B cell (primary cell): ENCODE measurements at regions of chr4 and their contacts with region 1.

Region 1: DNA sequence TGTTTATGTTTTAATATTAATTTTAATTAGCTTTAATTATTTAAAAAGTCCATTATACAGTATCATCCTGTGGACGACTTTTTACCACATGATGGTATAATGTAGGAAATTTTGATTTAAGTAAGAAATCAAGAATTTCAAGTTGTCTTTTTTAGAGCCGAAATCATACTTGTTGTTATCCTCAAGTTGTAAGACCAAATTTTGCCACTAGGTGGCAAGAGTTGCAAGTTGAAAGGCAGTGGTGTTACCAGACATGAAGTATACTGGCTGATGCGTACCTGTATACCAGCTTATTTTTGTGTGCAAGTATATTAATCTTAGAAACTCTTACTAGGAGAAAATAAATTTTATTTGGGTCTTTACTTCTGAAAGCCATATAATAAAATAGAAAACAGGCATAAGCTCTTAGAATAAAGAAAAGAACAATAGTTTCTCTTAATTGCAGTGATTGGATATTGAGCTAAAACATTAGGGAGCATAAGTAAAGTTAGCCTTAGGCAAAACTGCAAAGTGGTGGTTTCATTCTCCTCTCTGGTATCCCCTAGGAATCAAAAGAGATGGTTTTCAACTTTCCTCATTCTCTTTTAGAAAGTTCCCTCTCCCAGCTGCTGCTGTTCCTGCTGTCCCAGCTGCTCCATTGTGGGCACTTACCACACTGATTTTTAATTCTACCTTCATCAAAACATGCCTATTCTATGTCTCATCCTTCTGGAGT is 118.0 kb upstream of the WDFY3 start:
- DNase-seq: peak; percentile 74
- ATAC-seq: peak; percentile 60
- H3K4me3 ChIP-seq: no peak overlapping the region
- H3K4me3 Mint-ChIP-seq: no peak overlapping the region
- H3K27ac ChIP-seq: no peak overlapping the region
- H3K27ac Mint-ChIP-seq: no peak overlapping the region
- H3K4me1 ChIP-seq: no peaks in the 10 kb centered on the region
- H3K4me1 Mint-ChIP-seq: peaks cover 6% of the 10 kb centered on the region
- H3K27me3 ChIP-seq: peaks cover 0 to 6% (median 5%) of the 10 kb centered on the region in 4 experiments
- H3K27me3 Mint-ChIP-seq: peaks cover 8% of the 10 kb centered on the region
- CTCF ChIP-seq: peak; percentile 89

Region 2: DNA sequence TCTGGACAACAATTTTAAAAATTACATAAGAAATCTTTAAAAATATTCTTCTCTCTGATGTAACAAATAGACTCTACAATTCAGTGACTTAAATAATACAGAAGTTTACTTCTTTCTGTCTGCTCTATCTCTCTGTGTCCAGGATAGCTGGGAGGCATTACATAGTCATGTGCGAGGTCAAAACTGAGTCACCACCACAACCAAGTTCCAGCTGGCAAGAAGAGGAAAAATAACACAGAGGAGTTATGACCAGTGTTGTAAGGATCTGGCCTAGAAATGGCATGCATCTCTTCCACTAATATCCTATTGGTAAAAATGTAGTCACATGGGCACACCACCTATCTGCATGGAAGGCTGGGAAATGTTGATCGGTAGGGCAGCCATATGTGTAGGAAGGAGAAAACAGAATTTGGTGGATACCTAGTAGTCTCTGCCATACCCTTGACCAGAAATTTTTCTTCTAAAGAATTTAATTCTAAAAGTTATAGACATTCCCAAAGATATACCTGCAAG is 78.6 kb before region 1 on chr4:
- CTCF ChIA-PET with region 1: no interaction called
- POLR2A ChIA-PET with region 1: no interaction called
- intact Hi-C with region 1: no loop called
- DNase-seq: no peak
- ATAC-seq: no peak
- H3K4me3 ChIP-seq: no peak overlapping the region
- H3K4me3 Mint-ChIP-seq: no peak overlapping the region
- H3K27ac ChIP-seq: no peak overlapping the region
- H3K27ac Mint-ChIP-seq: no peak overlapping the region
- H3K4me1 ChIP-seq: no peaks in the 10 kb centered on the region
- H3K4me1 Mint-ChIP-seq: no peaks in the 10 kb centered on the region
- H3K27me3 ChIP-seq: no peaks in the 10 kb centered on the region
- H3K27me3 Mint-ChIP-seq: no peaks in the 10 kb centered on the region
- CTCF ChIP-seq: no peak

Region 3: DNA sequence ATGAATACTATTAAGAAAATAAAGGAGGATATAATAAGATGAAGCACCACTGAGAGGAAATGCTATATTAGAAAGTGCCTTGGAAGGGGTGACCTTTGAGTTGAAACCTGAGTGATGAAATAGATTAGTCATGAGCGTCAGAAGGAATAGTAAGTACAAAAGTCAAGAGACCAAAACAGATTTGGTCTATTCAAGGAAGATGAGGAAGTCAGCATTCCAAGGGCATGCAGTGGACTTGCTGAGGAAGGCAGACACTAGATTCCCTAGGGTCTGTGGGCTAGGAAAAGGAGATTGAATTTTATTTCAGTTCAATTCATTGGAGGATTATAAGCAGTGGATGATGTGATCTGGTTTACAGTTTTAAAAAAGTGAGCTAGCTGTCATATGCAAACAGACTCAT is 45.0 kb before region 1 on chr4:
- CTCF ChIA-PET with region 1: no interaction called
- POLR2A ChIA-PET with region 1: no interaction called
- intact Hi-C with region 1: no loop called
- DNase-seq: no peak
- ATAC-seq: no peak
- H3K4me3 ChIP-seq: no peak overlapping the region
- H3K4me3 Mint-ChIP-seq: no peak overlapping the region
- H3K27ac ChIP-seq: no peak overlapping the region
- H3K27ac Mint-ChIP-seq: no peak overlapping the region
- H3K4me1 ChIP-seq: no peaks in the 10 kb centered on the region
- H3K4me1 Mint-ChIP-seq: no peaks in the 10 kb centered on the region
- H3K27me3 ChIP-seq: peaks cover 0 to 3% (median 0%) of the 10 kb centered on the region in 4 experiments
- H3K27me3 Mint-ChIP-seq: peaks cover 7% of the 10 kb centered on the region
- CTCF ChIP-seq: no peak

Region 4: DNA sequence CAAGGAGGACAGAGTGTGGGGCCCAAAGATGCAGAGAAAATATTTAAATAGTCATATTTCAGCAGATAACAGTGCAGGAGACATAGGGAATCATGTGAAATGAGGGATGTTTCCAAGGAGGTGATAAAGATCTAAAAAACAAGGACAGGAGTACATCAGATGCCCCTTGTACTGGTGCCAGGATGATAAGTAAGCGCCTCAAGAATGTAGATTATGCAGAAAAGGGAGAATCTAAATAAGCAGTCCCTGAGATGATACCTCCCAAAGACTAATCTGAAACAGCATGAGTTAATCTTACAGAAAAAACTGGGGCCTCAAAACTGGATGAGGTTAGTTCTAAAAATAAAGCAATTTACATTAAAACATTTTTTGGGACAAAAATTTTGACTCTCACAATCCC is 18.1 kb after region 1 on chr4:
- CTCF ChIA-PET with region 1: interaction called, 17 read pairs
- POLR2A ChIA-PET with region 1: no interaction called
- intact Hi-C with region 1: no loop called
- DNase-seq: no peak
- ATAC-seq: no peak
- H3K4me3 ChIP-seq: no peak overlapping the region
- H3K4me3 Mint-ChIP-seq: no peak overlapping the region
- H3K27ac ChIP-seq: no peak overlapping the region
- H3K27ac Mint-ChIP-seq: no peak overlapping the region
- H3K4me1 ChIP-seq: no peaks in the 10 kb centered on the region
- H3K4me1 Mint-ChIP-seq: no peaks in the 10 kb centered on the region
- H3K27me3 ChIP-seq: peaks cover 0 to 3% (median 0%) of the 10 kb centered on the region in 4 experiments
- H3K27me3 Mint-ChIP-seq: peaks cover 10% of the 10 kb centered on the region
- CTCF ChIP-seq: no peak

Region 5: GRCh38 chr4:85147439-85148076 is 63.0 kb after region 1 on chr4:
- CTCF ChIA-PET with region 1: interaction called, 7 read pairs
- POLR2A ChIA-PET with region 1: no interaction called
- intact Hi-C with region 1: loop called (anchors 2 kb)
- DNase-seq: peak; percentile 82
- ATAC-seq: peak; percentile 83
- H3K4me3 ChIP-seq: no peak overlapping the region
- H3K4me3 Mint-ChIP-seq: no peak overlapping the region
- H3K27ac ChIP-seq: no peak overlapping the region
- H3K27ac Mint-ChIP-seq: no peak overlapping the region
- H3K4me1 ChIP-seq: peaks cover 0 to 2% of the 10 kb centered on the region in 2 donors
- H3K4me1 Mint-ChIP-seq: peaks cover 6% of the 10 kb centered on the region
- H3K27me3 ChIP-seq: no peaks in the 10 kb centered on the region
- H3K27me3 Mint-ChIP-seq: no peaks in the 10 kb centered on the region
- CTCF ChIP-seq: peak; percentile 90

Region 6: GRCh38 chr4:85968945-85969819 is 884.6 kb after region 1 on chr4:
- CTCF ChIA-PET with region 1: interaction called, 58 read pairs
- POLR2A ChIA-PET with region 1: no interaction called
- intact Hi-C with region 1: loop called (anchors 1 kb)
- DNase-seq: peak; percentile 66
- ATAC-seq: peak; percentile 28
- H3K4me3 ChIP-seq: no peak overlapping the region
- H3K4me3 Mint-ChIP-seq: no peak overlapping the region
- H3K27ac ChIP-seq: no peak overlapping the region
- H3K27ac Mint-ChIP-seq: no peak overlapping the region
- H3K4me1 ChIP-seq: peaks cover 0 to 6% of the 10 kb centered on the region in 2 donors
- H3K4me1 Mint-ChIP-seq: peaks cover 15% of the 10 kb centered on the region
- H3K27me3 ChIP-seq: no peaks in the 10 kb centered on the region
- H3K27me3 Mint-ChIP-seq: no peaks in the 10 kb centered on the region
- CTCF ChIP-seq: peak; percentile 75

Region 7: GRCh38 chr4:86032476-86033022 is 948.0 kb after region 1 on chr4:
- CTCF ChIA-PET with region 1: interaction called, 14 read pairs
- POLR2A ChIA-PET with region 1: no interaction called
- intact Hi-C with region 1: no loop called
- DNase-seq: no peak
- ATAC-seq: no peak
- H3K4me3 ChIP-seq: no peak overlapping the region
- H3K4me3 Mint-ChIP-seq: no peak overlapping the region
- H3K27ac ChIP-seq: no peak overlapping the region
- H3K27ac Mint-ChIP-seq: no peak overlapping the region
- H3K4me1 ChIP-seq: no peaks in the 10 kb centered on the region
- H3K4me1 Mint-ChIP-seq: no peaks in the 10 kb centered on the region
- H3K27me3 ChIP-seq: peaks cover 0 to 15% (median 3%) of the 10 kb centered on the region in 4 experiments
- H3K27me3 Mint-ChIP-seq: peaks cover 31% of the 10 kb centered on the region
- CTCF ChIP-seq: no peak

Region 8: DNA sequence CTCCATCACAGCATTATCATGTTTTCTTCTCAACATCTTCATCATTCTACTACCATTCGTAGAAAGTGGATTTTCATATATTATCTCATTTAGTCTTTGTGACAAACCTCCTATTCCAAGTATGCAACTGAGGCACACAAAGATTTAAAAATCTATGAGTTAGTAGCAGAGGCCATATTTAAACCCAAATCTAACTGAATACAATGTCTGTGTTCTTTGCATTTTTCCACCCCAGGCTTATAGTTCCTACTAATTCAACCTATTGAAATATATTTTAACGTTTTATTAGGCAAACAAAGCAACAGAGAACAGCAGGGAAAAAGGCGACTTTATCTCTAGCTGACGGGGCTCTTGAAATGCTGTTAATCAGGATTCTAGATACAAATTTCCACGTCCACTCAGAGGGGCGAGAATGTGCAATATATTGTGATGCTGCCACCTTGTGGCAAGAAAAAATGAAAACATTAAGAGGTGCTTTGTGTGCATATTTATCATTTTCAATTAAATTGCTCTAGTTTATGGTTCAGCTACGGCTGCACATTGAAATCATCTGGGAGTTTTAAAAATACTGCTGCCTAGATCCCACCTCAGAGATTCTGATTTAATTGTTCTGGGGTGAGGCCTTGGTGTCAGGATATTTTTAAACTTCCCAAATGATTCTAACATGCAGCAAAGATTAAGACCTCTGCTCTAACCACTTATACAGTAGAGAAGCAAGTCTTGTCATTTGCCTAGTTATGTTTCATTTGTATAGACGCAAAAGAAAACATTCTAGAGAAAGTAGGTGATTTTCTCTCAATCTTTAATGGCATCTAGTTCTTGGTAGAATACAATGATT is 959.4 kb after region 1 on chr4:
- CTCF ChIA-PET with region 1: interaction called, 113 read pairs
- POLR2A ChIA-PET with region 1: no interaction called
- intact Hi-C with region 1: loop called (anchors 1 kb)
- DNase-seq: peak; percentile 69
- ATAC-seq: peak; percentile 51
- H3K4me3 ChIP-seq: no peak overlapping the region
- H3K4me3 Mint-ChIP-seq: no peak overlapping the region
- H3K27ac ChIP-seq: no peak overlapping the region
- H3K27ac Mint-ChIP-seq: no peak overlapping the region
- H3K4me1 ChIP-seq: no peaks in the 10 kb centered on the region
- H3K4me1 Mint-ChIP-seq: no peaks in the 10 kb centered on the region
- H3K27me3 ChIP-seq: no peaks in the 10 kb centered on the region
- H3K27me3 Mint-ChIP-seq: no peaks in the 10 kb centered on the region
- CTCF ChIP-seq: peak; percentile 89

Region 9: DNA sequence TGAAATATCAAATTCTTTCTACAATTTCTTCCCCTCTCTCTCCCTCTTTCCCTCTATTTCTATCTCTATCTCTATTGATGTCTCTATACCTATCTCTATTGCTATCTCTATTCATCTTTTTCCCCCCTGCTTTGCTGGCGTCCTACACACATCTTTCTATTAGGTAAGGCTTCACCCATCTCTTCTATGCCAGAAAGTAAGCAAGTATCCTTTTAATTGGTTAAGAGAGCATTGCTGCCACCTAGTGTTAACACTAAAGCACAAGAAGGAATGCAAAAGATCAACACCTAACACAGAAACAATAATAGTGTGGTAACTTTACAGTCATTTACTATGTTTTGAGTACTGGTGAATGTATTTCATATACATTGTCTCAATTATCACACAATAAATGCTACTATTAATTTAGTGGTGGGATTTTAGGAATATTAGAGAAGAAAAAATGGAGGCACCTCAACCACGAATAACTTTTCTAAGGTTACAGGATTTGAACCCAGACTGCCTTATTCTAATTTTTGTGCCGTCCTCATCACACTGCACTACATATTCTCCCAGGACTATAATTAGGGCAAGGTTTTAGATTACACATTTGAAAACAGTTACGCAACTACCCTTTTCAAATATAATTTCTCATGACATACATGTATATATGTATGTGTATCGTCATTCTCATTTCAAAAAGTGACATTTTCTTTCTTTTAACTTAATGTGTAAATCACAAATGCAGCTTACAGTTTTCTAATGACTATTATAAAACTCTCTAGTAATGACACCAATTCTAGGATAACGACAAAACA is 1811.4 kb after region 1 on chr4:
- CTCF ChIA-PET with region 1: interaction called, 3 read pairs
- POLR2A ChIA-PET with region 1: no interaction called
- intact Hi-C with region 1: loop called (anchors 5 kb)
- DNase-seq: peak; percentile 59
- ATAC-seq: peak; percentile 60
- H3K4me3 ChIP-seq: no peak overlapping the region
- H3K4me3 Mint-ChIP-seq: no peak overlapping the region
- H3K27ac ChIP-seq: no peak overlapping the region
- H3K27ac Mint-ChIP-seq: no peak overlapping the region
- H3K4me1 ChIP-seq: peaks cover 10 to 13% of the 10 kb centered on the region in 2 donors
- H3K4me1 Mint-ChIP-seq: peaks cover 9% of the 10 kb centered on the region
- H3K27me3 ChIP-seq: peaks cover 0 to 20% (median 7%) of the 10 kb centered on the region in 4 experiments
- H3K27me3 Mint-ChIP-seq: peaks cover 17% of the 10 kb centered on the region
- CTCF ChIP-seq: peak; percentile 91